Activated T-helper 2 cell treated with anti-CD3 and anti-CD28 coated beads, Interferon-gamma antibody, Interleukin-2, Interleukin-4, amounts not matched to agents 10 μg/mL and 5 μg/mL and 100 μg/mL, durations not matched to agents 14 hours and 24 hours and 36 hours (primary cell): ENCODE measurements at regions of chr9 and their contacts with region 1.

Region 1: GRCh38 chr9:1505489-1505888 is 455.3 kb downstream of the DMRT2 start:
- DNase-seq: no peak
- H3K4me3 Mint-ChIP-seq: no peak overlapping the region
- H3K27ac Mint-ChIP-seq: peak overlapping the region; percentile 87
- H3K4me1 Mint-ChIP-seq: peaks cover 20% of the 10 kb centered on the region
- H3K27me3 Mint-ChIP-seq: no peaks in the 10 kb centered on the region

Region 2: GRCh38 chr9:1470001-1470804 is 35.3 kb before region 1 on chr9:
- intact Hi-C with region 1: loop called (anchors 1 kb)
- DNase-seq: no peak
- H3K4me3 Mint-ChIP-seq: no peak overlapping the region
- H3K27ac Mint-ChIP-seq: peak overlapping the region; percentile 41
- H3K4me1 Mint-ChIP-seq: peaks cover 8% of the 10 kb centered on the region
- H3K27me3 Mint-ChIP-seq: no peaks in the 10 kb centered on the region